Natural killer cell (primary cell): ENCODE measurements at regions of chr9 and their contacts with region 1.

Region 1: GRCh38 chr9:32378993-32379729 is 5.3 kb upstream of the ACO1 start:
- DNase-seq: peak in 1 of 2 donors; percentile 88
- ATAC-seq: peak; percentile 87 to 89 (median 89)
- H3K4me3 ChIP-seq: no peak overlapping the region
- H3K4me3 Mint-ChIP-seq: no peak overlapping the region
- H3K27ac ChIP-seq: no peak overlapping the region
- H3K27ac Mint-ChIP-seq: no peak overlapping the region
- H3K4me1 ChIP-seq: peaks cover 8% of the 10 kb centered on the region
- H3K4me1 Mint-ChIP-seq: peaks cover 5 to 13% of the 10 kb centered on the region in 2 donors
- H3K27me3 ChIP-seq: peaks cover 8% of the 10 kb centered on the region
- H3K27me3 Mint-ChIP-seq: peaks cover 14 to 50% of the 10 kb centered on the region in 2 donors
- CTCF ChIP-seq: peak; percentile 70

Region 2: GRCh38 chr9:32322622-32323021 is 56.5 kb before region 1 on chr9:
- intact Hi-C with region 1: no loop called
- DNase-seq: no peak
- ATAC-seq: no peak
- H3K4me3 ChIP-seq: no peak overlapping the region
- H3K4me3 Mint-ChIP-seq: no peak overlapping the region
- H3K27ac ChIP-seq: no peak overlapping the region
- H3K27ac Mint-ChIP-seq: no peak overlapping the region
- H3K4me1 ChIP-seq: no peaks in the 10 kb centered on the region
- H3K4me1 Mint-ChIP-seq: no peaks in the 10 kb centered on the region
- H3K27me3 ChIP-seq: no peaks in the 10 kb centered on the region
- H3K27me3 Mint-ChIP-seq: peaks cover 0 to 6% of the 10 kb centered on the region in 2 donors
- CTCF ChIP-seq: no peak

Region 3: GRCh38 chr9:32431940-32432555 is 52.9 kb after region 1 on chr9:
- intact Hi-C with region 1: loop called (anchors 1 kb)
- DNase-seq: peak in 1 of 2 donors; percentile 64
- ATAC-seq: peak in 2 of 3 donors; percentile 38 to 51
- H3K4me3 ChIP-seq: no peak overlapping the region
- H3K4me3 Mint-ChIP-seq: no peak overlapping the region
- H3K27ac ChIP-seq: no peak overlapping the region
- H3K27ac Mint-ChIP-seq: peak overlapping the region in 1 of 2 donors; percentile 7
- H3K4me1 ChIP-seq: no peaks in the 10 kb centered on the region
- H3K4me1 Mint-ChIP-seq: peaks cover 5% of the 10 kb centered on the region in 2 donors
- H3K27me3 ChIP-seq: no peaks in the 10 kb centered on the region
- H3K27me3 Mint-ChIP-seq: no peaks in the 10 kb centered on the region
- CTCF ChIP-seq: peak; percentile 32

Region 4: DNA sequence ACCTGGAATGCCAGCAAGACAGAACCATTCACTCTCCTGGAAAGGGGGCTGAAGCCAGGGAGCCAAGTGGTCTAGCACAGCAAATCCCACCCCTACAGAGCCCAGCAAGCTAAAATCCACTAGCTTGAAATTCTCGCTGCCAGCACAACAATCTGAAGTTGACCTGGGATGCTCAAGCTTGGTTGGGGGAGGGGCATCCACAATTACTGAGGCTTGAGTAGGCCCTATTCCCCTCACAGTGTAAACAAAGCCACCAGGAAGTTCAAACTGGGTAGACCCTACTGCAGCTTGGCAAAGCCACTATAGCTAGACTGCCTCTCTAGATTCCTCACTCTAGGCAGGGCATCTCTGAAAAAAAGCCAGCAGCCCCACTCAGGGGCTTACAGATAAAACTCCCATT is 129.6 kb after region 1 on chr9:
- intact Hi-C with region 1: no loop called
- DNase-seq: no peak
- ATAC-seq: no peak
- H3K4me3 ChIP-seq: no peak overlapping the region
- H3K4me3 Mint-ChIP-seq: no peak overlapping the region
- H3K27ac ChIP-seq: no peak overlapping the region
- H3K27ac Mint-ChIP-seq: no peak overlapping the region
- H3K4me1 ChIP-seq: no peaks in the 10 kb centered on the region
- H3K4me1 Mint-ChIP-seq: peaks cover 46 to 65% of the 10 kb centered on the region in 2 donors
- H3K27me3 ChIP-seq: no peaks in the 10 kb centered on the region
- H3K27me3 Mint-ChIP-seq: no peaks in the 10 kb centered on the region
- CTCF ChIP-seq: no peak

Region 5: GRCh38 chr9:32526041-32526706 is 147.0 kb after region 1 on chr9 and contains the start of gene RIGI:
- intact Hi-C with region 1: loop called (anchors 1 kb)
- DNase-seq: peak; percentile 72 to 93
- ATAC-seq: peak; percentile 80 to 84 (median 82)
- H3K4me3 ChIP-seq: peak within 1 kb of the TSS; percentile 92
- H3K4me3 Mint-ChIP-seq: peak within 1 kb of the TSS; percentile 93
- H3K27ac ChIP-seq: peak within 1 kb of the TSS; percentile 87
- H3K27ac Mint-ChIP-seq: peak within 1 kb of the TSS; percentile 79 to 96
- H3K4me1 ChIP-seq: peaks cover 12% of the 10 kb centered on the region
- H3K4me1 Mint-ChIP-seq: peaks cover 53 to 56% of the 10 kb centered on the region in 2 donors
- H3K27me3 ChIP-seq: no peaks in the 10 kb centered on the region
- H3K27me3 Mint-ChIP-seq: no peaks in the 10 kb centered on the region
- CTCF ChIP-seq: no peak
- total RNA-seq, gene RIGI: 13.8 to 21.3 (median 15.7) TPM

Region 6: DNA sequence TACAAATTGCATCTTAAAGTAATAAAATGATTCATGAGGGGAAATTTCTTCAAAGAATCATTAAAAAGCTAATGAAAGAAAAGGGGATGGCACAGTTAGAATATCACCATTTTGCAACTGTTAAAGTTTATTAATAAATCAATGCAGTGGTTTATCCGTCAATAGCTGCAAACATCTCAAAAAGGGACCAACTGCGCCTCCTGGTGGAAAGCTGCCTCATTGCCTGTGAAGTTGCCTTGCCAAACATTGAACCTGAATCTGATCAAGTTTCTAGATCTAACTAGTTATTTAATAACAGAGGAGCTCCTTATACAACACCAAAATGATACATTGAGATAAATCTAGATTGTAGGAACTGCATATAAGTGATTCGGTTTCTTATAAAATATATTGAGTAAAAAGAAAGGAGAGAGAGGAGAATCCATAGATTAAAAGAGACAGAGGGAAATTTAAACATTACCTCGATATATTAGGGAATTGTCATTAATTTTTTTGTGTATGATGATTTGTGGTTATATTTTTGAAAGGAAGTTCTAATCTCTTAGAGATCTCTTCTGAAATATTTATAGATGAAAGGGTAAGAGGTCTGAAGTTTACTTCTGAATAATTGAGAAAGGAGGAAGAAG is 200.7 kb after region 1 on chr9:
- intact Hi-C with region 1: loop called (anchors 1 kb)
- DNase-seq: peak; percentile 71 to 89
- ATAC-seq: peak; percentile 63 to 78 (median 72)
- H3K4me3 ChIP-seq: no peak overlapping the region
- H3K4me3 Mint-ChIP-seq: no peak overlapping the region
- H3K27ac ChIP-seq: no peak overlapping the region
- H3K27ac Mint-ChIP-seq: no peak overlapping the region
- H3K4me1 ChIP-seq: no peaks in the 10 kb centered on the region
- H3K4me1 Mint-ChIP-seq: no peaks in the 10 kb centered on the region
- H3K27me3 ChIP-seq: peaks cover 6% of the 10 kb centered on the region
- H3K27me3 Mint-ChIP-seq: peaks cover 28 to 55% of the 10 kb centered on the region in 2 donors
- CTCF ChIP-seq: peak; percentile 95

Region 7: DNA sequence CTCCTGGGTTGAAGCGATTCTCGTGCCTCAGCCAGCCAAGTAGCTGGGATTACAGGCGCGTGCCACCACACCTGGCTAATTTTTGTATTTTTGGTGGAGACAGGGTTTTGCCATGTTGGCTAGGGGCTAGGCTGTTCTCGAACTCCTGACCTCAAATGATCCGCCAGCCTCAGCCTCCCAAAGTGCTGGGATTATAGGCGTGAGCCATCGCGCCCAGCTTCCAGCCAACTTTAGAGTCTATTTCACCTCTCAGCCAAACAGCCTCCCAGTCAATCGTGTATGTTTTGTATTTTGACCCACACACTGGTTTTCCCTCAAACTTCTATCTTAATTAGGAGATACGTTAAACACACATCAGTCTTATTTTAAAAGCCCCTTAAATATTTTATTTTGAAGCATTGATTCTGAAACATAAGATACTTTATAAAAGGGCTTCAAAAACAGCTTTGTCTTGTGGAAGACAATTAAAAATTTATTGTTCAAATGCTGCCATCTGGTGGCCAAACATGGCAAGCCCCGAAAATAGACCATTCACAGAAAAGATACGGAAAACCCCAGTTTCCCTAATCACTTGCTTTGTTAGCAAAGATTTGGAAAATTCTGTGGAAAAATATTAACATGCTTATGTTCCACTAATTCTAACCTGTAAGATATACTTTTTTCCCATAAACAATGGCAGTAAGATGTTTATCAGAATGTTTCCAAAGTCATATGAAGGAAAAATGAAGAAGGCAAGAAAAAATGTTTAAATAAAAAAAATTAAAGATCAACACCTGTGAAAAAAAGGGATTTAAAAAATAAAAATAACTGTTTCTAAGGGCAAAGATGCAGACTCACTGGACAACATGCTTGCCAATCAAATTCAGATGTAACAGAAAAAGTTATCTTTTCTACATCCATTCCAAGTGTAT is 589.2 kb after region 1 on chr9:
- intact Hi-C with region 1: loop called (anchors 1 kb)
- DNase-seq: peak; percentile 45 to 73
- ATAC-seq: peak in 2 of 3 donors; percentile 42 to 56
- H3K4me3 ChIP-seq: no peak overlapping the region
- H3K4me3 Mint-ChIP-seq: no peak overlapping the region
- H3K27ac ChIP-seq: no peak overlapping the region
- H3K27ac Mint-ChIP-seq: no peak overlapping the region
- H3K4me1 ChIP-seq: no peaks in the 10 kb centered on the region
- H3K4me1 Mint-ChIP-seq: peaks cover 6 to 7% of the 10 kb centered on the region in 2 donors
- H3K27me3 ChIP-seq: no peaks in the 10 kb centered on the region
- H3K27me3 Mint-ChIP-seq: no peaks in the 10 kb centered on the region
- CTCF ChIP-seq: peak; percentile 95